Breast epithelium (tissue), 4 donors: ENCODE measurements at regions of chr14 and their contacts with region 1.

Region 1: GRCh38 chr14:80941241-80942182 is at the start of gene CEP128:
- DNase-seq: peak; percentile 89 to 91
- H3K4me3 ChIP-seq: peak within 1 kb of the TSS; percentile 67 to 76 (median 69)
- H3K27ac ChIP-seq: peak within 1 kb of the TSS; percentile 70 to 71
- H3K4me1 ChIP-seq: peaks cover 0 to 3% of the 10 kb centered on the region in 2 donors
- H3K27me3 ChIP-seq: no peaks in the 10 kb centered on the region
- CTCF ChIP-seq: no peak
- POLR2A ChIP-seq: no peak
- total RNA-seq, gene CEP128: 10.2 to 16.1 (median 11.0) TPM

Region 2: GRCh38 chr14:80901260-80901659 is 40.3 kb before region 1 on chr14:
- intact Hi-C with region 1: no loop called
- DNase-seq: no peak
- H3K4me3 ChIP-seq: no peak overlapping the region
- H3K27ac ChIP-seq: no peak overlapping the region
- H3K4me1 ChIP-seq: no peaks in the 10 kb centered on the region
- H3K27me3 ChIP-seq: no peaks in the 10 kb centered on the region
- CTCF ChIP-seq: no peak
- POLR2A ChIP-seq: no peak

Region 3: GRCh38 chr14:81400852-81401251 is 459.3 kb after region 1 on chr14:
- intact Hi-C with region 1: loop called (anchors 10 kb)
- DNase-seq: peak; percentile 74 to 96
- H3K4me3 ChIP-seq: peak overlapping the region in 1 of 3 donors; percentile 2
- H3K27ac ChIP-seq: peak overlapping the region; percentile 93 to 94
- H3K4me1 ChIP-seq: peaks cover 5 to 18% of the 10 kb centered on the region in 2 donors
- H3K27me3 ChIP-seq: no peaks in the 10 kb centered on the region
- CTCF ChIP-seq: no peak
- POLR2A ChIP-seq: no peak